Astrocyte of the cerebellum (primary cell): ENCODE measurements at regions of chr12 and their contacts with region 1.

Region 1: DNA sequence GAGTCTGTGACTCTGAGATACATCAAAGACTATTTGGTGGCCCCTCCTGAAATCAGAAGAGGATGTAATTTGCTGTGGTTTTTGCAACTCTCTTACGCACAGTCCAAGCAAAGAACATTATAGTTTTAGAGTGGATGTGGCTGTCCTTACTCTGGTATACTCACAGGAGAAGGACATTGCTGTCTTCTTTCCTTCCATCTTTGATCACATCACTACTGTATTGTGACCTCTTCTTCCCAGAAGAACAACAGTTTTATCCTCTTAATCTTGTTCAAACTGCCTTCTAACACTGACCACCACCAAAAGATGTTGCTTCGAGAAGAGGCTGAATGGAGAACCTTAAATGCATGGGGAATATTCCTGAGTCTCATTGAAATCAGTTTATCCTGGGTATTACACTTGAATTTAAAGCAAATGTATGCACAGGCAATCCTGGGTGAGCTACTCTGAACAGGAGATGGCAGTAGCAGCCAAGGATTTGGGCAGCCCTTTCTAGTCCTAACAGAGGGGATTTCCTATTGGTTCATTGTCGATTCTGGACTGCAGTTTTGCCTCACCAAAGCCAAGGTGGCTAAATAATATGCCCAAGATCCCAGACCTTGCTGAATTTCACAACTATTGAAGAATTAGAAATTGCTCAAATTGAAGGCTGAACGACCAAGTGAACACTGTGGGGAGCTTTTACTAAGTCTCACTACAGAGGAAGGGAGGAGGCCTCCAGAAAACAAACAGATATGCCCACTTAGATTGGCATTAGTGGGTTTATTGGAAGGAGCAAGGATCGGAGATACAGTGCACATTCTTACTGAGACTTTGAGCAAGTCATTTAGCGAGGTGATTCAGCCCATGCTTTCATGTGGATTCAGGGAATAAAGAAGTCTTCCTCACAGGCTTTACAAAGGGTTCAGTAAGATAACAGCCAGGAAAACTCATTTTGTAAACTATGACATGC is 282.8 kb downstream of the PAWR start:
- DNase-seq: peak; percentile 90
- H3K4me3 ChIP-seq: no peak overlapping the region
- CTCF ChIP-seq: peak; percentile 85

Region 2: DNA sequence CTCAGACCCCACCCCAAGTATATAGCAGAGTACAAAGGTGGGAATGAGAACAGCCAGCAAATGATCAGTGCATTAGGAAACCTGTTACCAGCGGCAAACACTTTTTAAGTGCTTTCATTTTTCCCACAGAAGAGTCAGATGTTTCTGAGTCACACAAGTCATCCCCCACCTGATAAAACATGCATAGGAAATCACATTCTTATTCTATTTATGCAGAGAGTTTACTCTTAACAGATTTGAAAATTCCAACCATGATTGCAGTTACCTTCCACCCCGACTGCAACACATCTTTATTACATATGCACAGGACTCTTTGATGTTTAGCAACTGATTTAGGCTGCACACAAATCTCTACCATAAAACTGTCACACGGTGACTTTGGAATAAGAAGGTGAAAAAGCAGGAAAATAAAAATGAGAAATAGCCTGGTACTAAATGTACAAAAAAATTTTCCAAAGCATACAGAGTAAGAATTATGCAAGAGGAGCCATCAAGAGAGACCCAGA is 46.4 kb after region 1 on chr12:
- in situ Hi-C with region 1: no loop called
- DNase-seq: peak; percentile 43
- H3K4me3 ChIP-seq: no peak overlapping the region
- CTCF ChIP-seq: no peak

Region 3: GRCh38 chr12:79547735-79548609 is 140.0 kb after region 1 on chr12:
- in situ Hi-C with region 1: loop called (anchors 25 kb)
- DNase-seq: peak; percentile 53
- H3K4me3 ChIP-seq: no peak overlapping the region
- CTCF ChIP-seq: peak; percentile 75